CD4-positive, alpha-beta memory T cell (primary cell): ENCODE measurements at regions of chr12 and their contacts with region 1.

Region 1: DNA sequence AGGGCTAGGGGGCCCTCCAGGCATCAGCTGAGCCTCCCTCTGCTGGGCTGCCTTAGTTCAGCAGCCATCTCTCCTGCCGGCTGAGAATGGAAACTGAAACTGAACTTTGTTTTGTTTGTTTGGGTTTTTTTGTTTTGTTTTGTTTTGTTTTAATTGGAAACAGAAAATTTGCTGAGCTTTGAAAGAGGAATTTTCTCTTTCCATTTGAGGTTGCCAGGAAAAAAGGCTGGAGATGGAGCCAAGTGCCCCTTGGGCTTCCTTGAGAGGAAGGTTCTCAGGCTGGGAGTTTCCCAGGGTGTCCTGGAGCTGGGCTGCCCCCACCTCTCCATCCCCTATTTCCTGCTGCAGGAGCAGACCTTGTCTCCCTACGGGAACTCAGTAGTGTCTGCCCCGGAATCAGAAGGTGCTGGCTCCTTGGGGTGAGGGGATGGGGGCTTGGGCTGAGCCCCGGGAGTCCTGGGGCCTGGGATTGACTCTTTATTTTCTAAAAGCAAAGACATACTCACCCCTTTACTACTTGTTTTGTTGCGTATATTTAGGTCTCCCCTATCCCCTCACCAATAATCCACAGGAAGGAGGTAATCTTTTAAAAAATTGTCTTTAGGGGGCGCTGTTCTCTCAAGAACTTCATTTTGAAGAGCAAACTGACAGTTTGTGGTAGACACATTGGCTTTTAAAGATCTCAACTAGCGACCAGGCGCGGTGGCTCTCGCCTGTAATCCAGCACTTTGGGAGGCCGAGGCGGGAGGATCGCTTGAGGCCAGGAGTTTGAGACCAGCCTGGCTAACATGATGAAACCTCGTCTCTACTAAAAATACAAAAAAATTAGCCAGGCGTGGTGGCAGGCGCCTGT is 21.3 kb upstream of the OASL start:
- DNase-seq: peak; percentile 69 to 77 (median 74)
- H3K4me3 ChIP-seq: peak overlapping the region; percentile 79 to 81
- H3K4me3 Mint-ChIP-seq: peak overlapping the region; percentile 80 to 91 (median 86)
- H3K27ac ChIP-seq: peak overlapping the region; percentile 66
- H3K27ac Mint-ChIP-seq: peak overlapping the region; percentile 84 to 97 (median 94)
- H3K4me1 ChIP-seq: peaks cover 4% of the 10 kb centered on the region
- H3K4me1 Mint-ChIP-seq: peaks cover 10 to 14% (median 12%) of the 10 kb centered on the region in 4 donors
- H3K27me3 ChIP-seq: no peaks in the 10 kb centered on the region
- H3K27me3 Mint-ChIP-seq: no peaks in the 10 kb centered on the region

Region 2: DNA sequence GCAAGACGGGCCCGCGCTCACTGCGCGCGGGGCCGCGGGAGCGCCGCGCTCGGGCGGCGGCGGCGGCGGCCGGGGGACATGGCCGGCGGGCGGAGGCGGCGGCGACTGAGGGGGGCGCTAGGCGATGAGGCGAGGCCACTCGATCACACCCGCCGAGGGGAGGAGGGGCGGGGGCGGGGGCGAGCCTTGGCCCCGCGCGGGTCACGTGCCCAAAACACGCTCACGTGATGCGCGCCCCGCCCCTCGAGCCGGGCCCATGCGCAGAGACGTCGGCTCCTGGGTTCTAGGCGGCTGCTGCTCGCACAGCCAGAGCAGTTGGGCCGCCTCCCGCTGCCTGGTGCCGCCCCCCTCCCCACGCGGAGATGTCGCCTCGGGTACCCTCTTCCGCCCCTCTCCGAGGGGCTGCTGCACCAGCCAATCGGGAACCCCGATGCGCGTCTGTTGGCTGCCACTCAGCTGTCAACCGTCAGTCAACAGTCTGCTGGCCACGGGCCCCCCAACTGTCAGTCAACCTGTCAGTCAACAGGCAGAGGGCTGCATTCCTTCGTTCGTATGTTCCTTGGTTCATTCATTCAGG is 156.1 kb before region 1 on chr12 and contains the start of gene SPPL3:
- CTCF ChIA-PET with region 1: no interaction called
- POLR2A ChIA-PET with region 1: no interaction called
- intact Hi-C with region 1: no loop called
- DNase-seq: peak; percentile 85 to 90 (median 87)
- H3K4me3 ChIP-seq: peak within 1 kb of the TSS; percentile 55 to 76
- H3K4me3 Mint-ChIP-seq: peak within 1 kb of the TSS; percentile 96 to 100 (median 99)
- H3K27ac ChIP-seq: peak within 1 kb of the TSS; percentile 76
- H3K27ac Mint-ChIP-seq: peak within 1 kb of the TSS; percentile 91 to 99 (median 98)
- H3K4me1 ChIP-seq: peaks cover 25% of the 10 kb centered on the region
- H3K4me1 Mint-ChIP-seq: peaks cover 21 to 39% (median 32%) of the 10 kb centered on the region in 4 donors
- H3K27me3 ChIP-seq: no peaks in the 10 kb centered on the region
- H3K27me3 Mint-ChIP-seq: no peaks in the 10 kb centered on the region
- total RNA-seq, gene SPPL3: 45.0 to 49.4 TPM

Region 3: GRCh38 chr12:120971299-120972179 is 88.8 kb before region 1 on chr12:
- CTCF ChIA-PET with region 1: interaction called, 12 read pairs
- POLR2A ChIA-PET with region 1: no interaction called
- intact Hi-C with region 1: no loop called
- DNase-seq: peak in 4 of 5 donors; percentile 59 to 68 (median 62)
- H3K4me3 ChIP-seq: no peak overlapping the region
- H3K4me3 Mint-ChIP-seq: no peak overlapping the region
- H3K27ac ChIP-seq: no peak overlapping the region
- H3K27ac Mint-ChIP-seq: peak overlapping the region in 2 of 7 donors; percentile 37 to 51
- H3K4me1 ChIP-seq: peaks cover 3% of the 10 kb centered on the region
- H3K4me1 Mint-ChIP-seq: peaks cover 6 to 9% (median 6%) of the 10 kb centered on the region in 4 donors
- H3K27me3 ChIP-seq: no peaks in the 10 kb centered on the region
- H3K27me3 Mint-ChIP-seq: no peaks in the 10 kb centered on the region

Region 4: GRCh38 chr12:121033625-121034349 is 26.6 kb before region 1 on chr12:
- CTCF ChIA-PET with region 1: interaction called, 65 read pairs
- POLR2A ChIA-PET with region 1: interaction called, 18 read pairs
- intact Hi-C with region 1: loop called (anchors 1 kb)
- DNase-seq: peak; percentile 61 to 88 (median 74)
- H3K4me3 ChIP-seq: peak overlapping the region in 1 of 2 donors; percentile 6
- H3K4me3 Mint-ChIP-seq: peak overlapping the region; percentile 1 to 99 (median 72)
- H3K27ac ChIP-seq: peak overlapping the region; percentile 71
- H3K27ac Mint-ChIP-seq: peak overlapping the region; percentile 85 to 96 (median 94)
- H3K4me1 ChIP-seq: peaks cover 62% of the 10 kb centered on the region
- H3K4me1 Mint-ChIP-seq: peaks cover 34 to 63% (median 47%) of the 10 kb centered on the region in 4 donors
- H3K27me3 ChIP-seq: no peaks in the 10 kb centered on the region
- H3K27me3 Mint-ChIP-seq: no peaks in the 10 kb centered on the region

Region 5: DNA sequence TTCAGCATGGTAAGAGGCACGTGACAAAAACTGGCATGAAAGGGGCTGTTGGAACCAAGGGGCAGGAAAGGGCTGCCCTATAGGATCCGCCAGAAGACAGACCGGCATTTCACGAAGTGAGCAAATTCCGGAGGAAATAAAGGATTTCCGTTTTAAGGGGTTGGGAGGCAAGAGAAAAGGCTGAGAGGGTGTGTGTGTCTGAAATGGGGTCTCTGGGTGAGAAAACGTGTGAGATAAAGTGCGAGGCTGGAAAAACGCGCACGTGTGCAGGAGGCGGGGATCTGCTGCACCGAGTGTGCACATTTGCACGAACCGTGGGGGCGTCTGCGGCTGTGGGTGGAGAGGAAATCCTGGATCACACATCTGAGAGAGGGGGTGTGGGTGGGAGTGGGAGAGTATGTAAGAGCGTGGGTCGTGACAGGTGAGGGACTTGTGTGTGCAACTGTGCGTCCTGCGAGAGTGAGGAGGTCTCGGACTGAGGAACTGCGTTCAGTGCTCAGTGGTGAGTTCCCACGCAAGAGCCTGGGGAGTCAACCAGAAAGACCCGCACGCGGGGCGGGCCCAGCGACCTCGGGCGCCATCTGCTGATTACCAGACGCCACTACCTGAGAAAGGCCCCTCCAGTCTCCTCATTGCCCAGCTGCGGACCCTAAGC is 35.3 kb after region 1 on chr12:
- CTCF ChIA-PET with region 1: interaction called, 137 read pairs
- POLR2A ChIA-PET with region 1: interaction called, 13 read pairs
- intact Hi-C with region 1: loop called (anchors 1 kb)
- DNase-seq: peak; percentile 72 to 77 (median 72)
- H3K4me3 ChIP-seq: peak overlapping the region; percentile 58 to 59
- H3K4me3 Mint-ChIP-seq: peak overlapping the region; percentile 76 to 91 (median 84)
- H3K27ac ChIP-seq: no peak overlapping the region
- H3K27ac Mint-ChIP-seq: peak overlapping the region; percentile 16 to 90 (median 76)
- H3K4me1 ChIP-seq: peaks cover 46% of the 10 kb centered on the region
- H3K4me1 Mint-ChIP-seq: peaks cover 34 to 54% (median 45%) of the 10 kb centered on the region in 4 donors
- H3K27me3 ChIP-seq: no peaks in the 10 kb centered on the region
- H3K27me3 Mint-ChIP-seq: peaks cover 1 to 7% of the 10 kb centered on the region in 2 donors

Region 6: GRCh38 chr12:121223292-121224285 is 163.2 kb after region 1 on chr12:
- CTCF ChIA-PET with region 1: interaction called, 4 read pairs
- POLR2A ChIA-PET with region 1: interaction called, 7 read pairs
- intact Hi-C with region 1: loop called (anchors 2 kb)
- DNase-seq: peak; percentile 34 to 64 (median 53)
- H3K4me3 ChIP-seq: peak overlapping the region in 1 of 2 donors; percentile 0
- H3K4me3 Mint-ChIP-seq: peak overlapping the region in 7 of 8 donors; percentile 19 to 84 (median 72)
- H3K27ac ChIP-seq: peak overlapping the region; percentile 47
- H3K27ac Mint-ChIP-seq: peak overlapping the region; percentile 86 to 97 (median 95)
- H3K4me1 ChIP-seq: peaks cover 52% of the 10 kb centered on the region
- H3K4me1 Mint-ChIP-seq: peaks cover 32 to 61% (median 44%) of the 10 kb centered on the region in 4 donors
- H3K27me3 ChIP-seq: no peaks in the 10 kb centered on the region
- H3K27me3 Mint-ChIP-seq: no peaks in the 10 kb centered on the region